Esophagus muscularis mucosa (tissue), 4 donors: ENCODE measurements at regions of chr14 and their contacts with region 1.

Region 1: GRCh38 chr14:105045710-105046326 is 19.4 kb downstream of the GPR132 start:
- DNase-seq: peak; percentile 96
- H3K4me3 ChIP-seq: peak overlapping the region in 1 of 4 donors; percentile 7
- H3K27ac ChIP-seq: no peak overlapping the region
- H3K4me1 ChIP-seq: peaks cover 3 to 11% (median 7%) of the 10 kb centered on the region in 4 donors
- H3K27me3 ChIP-seq: peaks cover 0 to 13% (median 0%) of the 10 kb centered on the region in 4 donors
- CTCF ChIP-seq: peak; percentile 100
- EP300 ChIP-seq: no peak
- POLR2A ChIP-seq: no peak

Region 2: DNA sequence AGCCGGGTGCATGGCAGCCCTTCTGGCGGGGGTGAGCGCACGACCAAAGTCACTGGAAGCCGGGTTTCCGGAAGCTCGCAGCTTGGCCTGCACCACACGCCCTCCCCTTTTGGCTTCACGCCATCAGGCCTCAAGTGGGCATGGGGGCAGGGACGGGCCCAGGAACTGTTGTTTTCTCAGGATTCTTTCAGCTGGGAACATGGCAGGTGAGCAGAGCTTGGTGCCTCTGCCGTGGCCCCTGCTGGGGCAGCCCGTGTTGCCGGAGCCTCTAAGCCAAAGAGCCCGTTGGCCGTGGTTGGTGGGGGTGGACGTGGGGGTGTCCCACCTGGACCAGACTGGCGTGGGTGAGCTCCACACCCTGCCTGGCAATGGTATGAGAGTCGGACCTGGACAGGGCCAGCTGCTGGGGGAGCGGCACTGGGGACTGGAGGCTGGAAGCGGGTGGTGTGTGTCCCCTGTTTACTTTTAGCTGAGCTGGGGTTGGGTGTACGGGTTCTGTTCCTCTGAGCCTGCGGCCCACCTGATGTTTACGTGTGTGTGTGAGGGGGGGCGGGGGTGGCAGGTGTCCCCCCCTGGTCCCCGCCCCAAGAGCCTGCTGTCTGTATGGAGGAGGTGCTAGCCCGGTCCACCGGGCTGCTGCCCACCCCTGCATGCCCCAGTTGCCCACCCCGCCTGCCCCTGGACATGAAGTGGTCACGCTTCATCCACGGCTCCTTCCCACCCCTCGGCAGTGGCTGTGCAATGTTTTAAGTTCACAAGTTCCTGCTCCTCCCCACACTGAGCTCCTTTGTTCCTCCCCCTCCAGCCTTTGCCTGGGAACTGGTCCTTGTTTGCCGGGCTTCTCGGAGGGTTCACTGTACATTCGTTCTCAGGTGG is 149.8 kb before region 1 on chr14:
- intact Hi-C with region 1: loop called (anchors 5 kb)
- DNase-seq: no peak
- H3K4me3 ChIP-seq: no peak overlapping the region
- H3K27ac ChIP-seq: no peak overlapping the region
- H3K4me1 ChIP-seq: peaks cover 18 to 34% (median 26%) of the 10 kb centered on the region in 4 donors
- H3K27me3 ChIP-seq: no peaks in the 10 kb centered on the region
- CTCF ChIP-seq: no peak
- EP300 ChIP-seq: no peak
- POLR2A ChIP-seq: no peak

Region 3: DNA sequence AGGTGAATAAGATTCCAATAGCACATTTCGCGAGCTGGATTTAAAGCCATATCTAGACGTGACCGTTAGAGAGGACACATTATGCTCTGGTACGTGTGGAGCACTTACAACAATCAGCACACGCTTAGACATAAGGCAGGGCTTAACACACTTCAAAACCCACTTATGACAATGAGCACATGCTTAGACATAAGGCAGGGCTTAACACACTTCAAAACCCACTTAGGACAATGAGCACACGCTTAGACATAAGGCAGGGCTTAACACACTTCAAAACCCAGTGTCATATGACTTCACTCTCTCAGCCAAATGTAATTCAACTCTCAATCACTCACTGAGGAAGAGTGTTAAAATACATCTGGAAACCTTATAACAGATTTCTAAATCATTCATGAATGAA is 132.4 kb before region 1 on chr14:
- intact Hi-C with region 1: no loop called
- DNase-seq: no peak
- H3K4me3 ChIP-seq: no peak overlapping the region
- H3K27ac ChIP-seq: no peak overlapping the region
- H3K4me1 ChIP-seq: no peaks in the 10 kb centered on the region
- H3K27me3 ChIP-seq: no peaks in the 10 kb centered on the region
- CTCF ChIP-seq: no peak
- EP300 ChIP-seq: no peak
- POLR2A ChIP-seq: no peak

Region 4: DNA sequence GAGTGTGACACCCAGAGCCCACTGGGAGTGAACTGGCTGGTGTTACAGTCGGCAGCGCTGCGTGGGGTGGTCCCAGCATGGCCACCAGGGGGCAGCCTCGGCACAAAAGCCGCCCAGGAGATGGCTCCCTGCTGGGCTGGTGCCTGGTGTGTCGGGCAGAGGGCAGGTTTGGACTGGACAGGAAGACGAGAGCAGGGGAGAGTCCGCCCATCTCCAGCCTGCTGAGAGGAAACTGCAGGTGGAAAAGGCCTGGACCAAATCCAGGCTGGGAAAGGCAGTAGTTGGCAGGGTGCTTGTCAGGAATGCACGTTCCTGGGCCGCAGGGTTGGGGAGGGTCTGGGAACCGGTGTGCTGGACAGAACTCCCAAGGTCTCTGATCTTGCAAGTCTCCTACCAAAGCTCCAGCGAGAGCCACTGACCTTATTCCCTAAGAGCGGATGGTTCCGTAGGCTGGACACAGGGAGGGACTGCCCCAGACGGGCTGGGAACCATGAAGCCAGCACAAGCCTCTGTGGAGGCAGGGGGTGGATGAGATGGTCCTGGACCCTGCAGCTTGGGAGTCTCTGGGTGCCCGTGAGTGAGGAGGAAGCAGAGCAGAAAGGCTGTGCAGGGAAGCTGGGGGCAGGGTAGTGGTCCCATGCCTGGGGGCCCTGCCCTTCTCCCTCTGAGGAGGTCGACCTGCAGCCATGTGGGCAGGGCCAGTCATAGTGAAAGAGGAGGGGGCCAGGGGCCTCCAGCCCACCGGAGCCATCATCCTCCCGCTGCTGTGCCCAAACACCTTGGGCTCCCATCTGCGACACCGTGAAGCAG is 69.4 kb before region 1 on chr14:
- intact Hi-C with region 1: loop called (anchors 1 kb)
- DNase-seq: no peak
- H3K4me3 ChIP-seq: peak overlapping the region in 3 of 4 donors; percentile 64 to 70 (median 67)
- H3K27ac ChIP-seq: peak overlapping the region; percentile 87 to 99 (median 94)
- H3K4me1 ChIP-seq: peaks cover 82 to 100% (median 93%) of the 10 kb centered on the region in 4 donors
- H3K27me3 ChIP-seq: no peaks in the 10 kb centered on the region
- CTCF ChIP-seq: peak; percentile 93 to 97 (median 93)
- EP300 ChIP-seq: no peak
- POLR2A ChIP-seq: no peak

Region 5: GRCh38 chr14:105005929-105006830 is 39.6 kb before region 1 on chr14:
- intact Hi-C with region 1: loop called (anchors 2 kb)
- DNase-seq: no peak
- H3K4me3 ChIP-seq: no peak overlapping the region
- H3K27ac ChIP-seq: no peak overlapping the region
- H3K4me1 ChIP-seq: no peaks in the 10 kb centered on the region
- H3K27me3 ChIP-seq: no peaks in the 10 kb centered on the region
- CTCF ChIP-seq: no peak
- EP300 ChIP-seq: no peak
- POLR2A ChIP-seq: no peak